ENCODE measurements at regions of chr1 and their contacts with region 1.

Region 1: GRCh38 chr1:24536391-24536840 is 19.5 kb upstream of the NCMAP start:
- DNase-seq: peak; percentile 54 to 96 (median 69)
- ATAC-seq: peak; percentile 77
- H3K4me3 ChIP-seq: no peak overlapping the region
- H3K4me3 Mint-ChIP-seq: peak overlapping the region; percentile 83
- H3K27ac ChIP-seq: peak overlapping the region; percentile 86
- H3K27ac Mint-ChIP-seq: peak overlapping the region; percentile 99
- H3K4me1 ChIP-seq: peaks cover 60% of the 10 kb centered on the region
- H3K4me1 Mint-ChIP-seq: peaks cover 73% of the 10 kb centered on the region
- H3K27me3 ChIP-seq: no peaks in the 10 kb centered on the region
- H3K27me3 Mint-ChIP-seq: no peaks in the 10 kb centered on the region
- CTCF ChIP-seq: no peak

Region 2: DNA sequence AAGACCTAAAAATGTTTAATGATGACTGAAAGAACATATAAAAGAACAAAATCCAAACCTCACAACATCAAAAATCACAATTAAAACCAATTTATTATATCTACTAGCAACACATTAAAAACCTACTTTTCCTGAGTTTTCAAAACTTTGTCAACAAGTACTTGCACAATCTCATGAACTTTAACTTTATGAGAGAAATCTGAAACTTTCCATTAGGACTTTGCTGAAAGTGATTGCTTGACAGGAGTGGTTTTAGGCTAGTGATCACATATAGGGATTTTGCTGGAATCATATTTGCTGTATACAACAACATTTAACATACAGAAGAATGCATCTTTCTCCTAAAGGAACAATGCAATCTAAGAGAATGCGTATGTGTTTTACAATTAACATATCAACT is 1205.6 kb before region 1 on chr1:
- CTCF ChIA-PET with region 1: no interaction called
- POLR2A ChIA-PET with region 1: no interaction called
- intact Hi-C with region 1: no loop called
- DNase-seq: no peak
- ATAC-seq: no peak
- H3K4me3 ChIP-seq: no peak overlapping the region
- H3K4me3 Mint-ChIP-seq: no peak overlapping the region
- H3K27ac ChIP-seq: no peak overlapping the region
- H3K27ac Mint-ChIP-seq: peak overlapping the region; percentile 21
- H3K4me1 ChIP-seq: no peaks in the 10 kb centered on the region
- H3K4me1 Mint-ChIP-seq: peaks cover 34% of the 10 kb centered on the region
- H3K27me3 ChIP-seq: no peaks in the 10 kb centered on the region
- H3K27me3 Mint-ChIP-seq: no peaks in the 10 kb centered on the region
- CTCF ChIP-seq: no peak

Region 3: GRCh38 chr1:24065304-24066050 is 470.9 kb before region 1 on chr1:
- CTCF ChIA-PET with region 1: no interaction called
- POLR2A ChIA-PET with region 1: no interaction called
- intact Hi-C with region 1: no loop called
- DNase-seq: no peak
- ATAC-seq: no peak
- H3K4me3 ChIP-seq: no peak overlapping the region
- H3K4me3 Mint-ChIP-seq: no peak overlapping the region
- H3K27ac ChIP-seq: no peak overlapping the region
- H3K27ac Mint-ChIP-seq: no peak overlapping the region
- H3K4me1 ChIP-seq: no peaks in the 10 kb centered on the region
- H3K4me1 Mint-ChIP-seq: no peaks in the 10 kb centered on the region
- H3K27me3 ChIP-seq: no peaks in the 10 kb centered on the region
- H3K27me3 Mint-ChIP-seq: no peaks in the 10 kb centered on the region
- CTCF ChIP-seq: no peak

Region 4: DNA sequence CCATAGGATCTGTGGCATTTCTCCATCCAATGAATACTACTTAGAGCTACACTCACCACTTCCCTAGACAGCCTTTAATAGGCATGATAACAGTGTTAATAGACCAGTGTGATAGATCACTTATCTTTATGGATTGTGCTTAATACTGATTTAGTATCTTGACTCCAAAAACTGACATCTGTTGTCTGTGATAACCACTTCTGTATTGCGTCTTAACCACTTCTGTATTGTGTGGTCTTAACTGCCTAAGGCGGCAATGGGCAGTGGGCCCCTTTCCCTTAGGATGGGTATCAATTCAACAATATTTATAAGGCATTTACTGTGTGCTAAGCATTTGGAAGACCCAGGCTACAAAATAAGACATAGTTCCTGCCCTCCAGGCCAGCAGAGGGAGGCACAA is 65.8 kb before region 1 on chr1:
- CTCF ChIA-PET with region 1: no interaction called
- POLR2A ChIA-PET with region 1: no interaction called
- intact Hi-C with region 1: no loop called
- DNase-seq: no peak
- ATAC-seq: no peak
- H3K4me3 ChIP-seq: no peak overlapping the region
- H3K4me3 Mint-ChIP-seq: no peak overlapping the region
- H3K27ac ChIP-seq: no peak overlapping the region
- H3K27ac Mint-ChIP-seq: peak overlapping the region; percentile 14
- H3K4me1 ChIP-seq: peaks cover 8% of the 10 kb centered on the region
- H3K4me1 Mint-ChIP-seq: peaks cover 12% of the 10 kb centered on the region
- H3K27me3 ChIP-seq: no peaks in the 10 kb centered on the region
- H3K27me3 Mint-ChIP-seq: no peaks in the 10 kb centered on the region
- CTCF ChIP-seq: no peak

Region 5: GRCh38 chr1:24481101-24481500 is 55.3 kb before region 1 on chr1:
- CTCF ChIA-PET with region 1: interaction called, 5 read pairs
- POLR2A ChIA-PET with region 1: no interaction called
- intact Hi-C with region 1: loop called (anchors 1 to 5 kb)
- DNase-seq: peak in 7 of 9 experiments; percentile 24 to 78 (median 61)
- ATAC-seq: peak; percentile 59
- H3K4me3 ChIP-seq: peak overlapping the region in 1 of 2 experiments; percentile 40
- H3K4me3 Mint-ChIP-seq: peak overlapping the region; percentile 73
- H3K27ac ChIP-seq: peak overlapping the region; percentile 67 to 68
- H3K27ac Mint-ChIP-seq: peak overlapping the region; percentile 98
- H3K4me1 ChIP-seq: peaks cover 64% of the 10 kb centered on the region
- H3K4me1 Mint-ChIP-seq: peaks cover 65% of the 10 kb centered on the region
- H3K27me3 ChIP-seq: no peaks in the 10 kb centered on the region
- H3K27me3 Mint-ChIP-seq: no peaks in the 10 kb centered on the region
- CTCF ChIP-seq: no peak

Region 6: GRCh38 chr1:24486331-24487065 is 49.9 kb before region 1 on chr1:
- CTCF ChIA-PET with region 1: interaction called, 5 read pairs
- POLR2A ChIA-PET with region 1: no interaction called
- intact Hi-C with region 1: loop called (anchors 1 to 5 kb)
- DNase-seq: peak in 7 of 9 experiments; percentile 9 to 80 (median 53)
- ATAC-seq: peak; percentile 30
- H3K4me3 ChIP-seq: peak overlapping the region in 1 of 2 experiments; percentile 3
- H3K4me3 Mint-ChIP-seq: peak overlapping the region; percentile 50
- H3K27ac ChIP-seq: peak overlapping the region; percentile 29 to 41
- H3K27ac Mint-ChIP-seq: peak overlapping the region; percentile 98
- H3K4me1 ChIP-seq: peaks cover 82% of the 10 kb centered on the region
- H3K4me1 Mint-ChIP-seq: peaks cover 72% of the 10 kb centered on the region
- H3K27me3 ChIP-seq: no peaks in the 10 kb centered on the region
- H3K27me3 Mint-ChIP-seq: no peaks in the 10 kb centered on the region
- CTCF ChIP-seq: no peak

Region 7: GRCh38 chr1:24514946-24515345 is 21.5 kb before region 1 on chr1:
- CTCF ChIA-PET with region 1: interaction called, 3 read pairs
- POLR2A ChIA-PET with region 1: interaction called, 7 read pairs
- intact Hi-C with region 1: loop called in 1 of 2 experiments (anchors 2 kb)
- DNase-seq: no peak
- ATAC-seq: no peak
- H3K4me3 ChIP-seq: no peak overlapping the region
- H3K4me3 Mint-ChIP-seq: peak overlapping the region; percentile 12
- H3K27ac ChIP-seq: no peak overlapping the region
- H3K27ac Mint-ChIP-seq: peak overlapping the region; percentile 81
- H3K4me1 ChIP-seq: peaks cover 68% of the 10 kb centered on the region
- H3K4me1 Mint-ChIP-seq: peaks cover 71% of the 10 kb centered on the region
- H3K27me3 ChIP-seq: no peaks in the 10 kb centered on the region
- H3K27me3 Mint-ChIP-seq: no peaks in the 10 kb centered on the region
- CTCF ChIP-seq: no peak

Region 8: DNA sequence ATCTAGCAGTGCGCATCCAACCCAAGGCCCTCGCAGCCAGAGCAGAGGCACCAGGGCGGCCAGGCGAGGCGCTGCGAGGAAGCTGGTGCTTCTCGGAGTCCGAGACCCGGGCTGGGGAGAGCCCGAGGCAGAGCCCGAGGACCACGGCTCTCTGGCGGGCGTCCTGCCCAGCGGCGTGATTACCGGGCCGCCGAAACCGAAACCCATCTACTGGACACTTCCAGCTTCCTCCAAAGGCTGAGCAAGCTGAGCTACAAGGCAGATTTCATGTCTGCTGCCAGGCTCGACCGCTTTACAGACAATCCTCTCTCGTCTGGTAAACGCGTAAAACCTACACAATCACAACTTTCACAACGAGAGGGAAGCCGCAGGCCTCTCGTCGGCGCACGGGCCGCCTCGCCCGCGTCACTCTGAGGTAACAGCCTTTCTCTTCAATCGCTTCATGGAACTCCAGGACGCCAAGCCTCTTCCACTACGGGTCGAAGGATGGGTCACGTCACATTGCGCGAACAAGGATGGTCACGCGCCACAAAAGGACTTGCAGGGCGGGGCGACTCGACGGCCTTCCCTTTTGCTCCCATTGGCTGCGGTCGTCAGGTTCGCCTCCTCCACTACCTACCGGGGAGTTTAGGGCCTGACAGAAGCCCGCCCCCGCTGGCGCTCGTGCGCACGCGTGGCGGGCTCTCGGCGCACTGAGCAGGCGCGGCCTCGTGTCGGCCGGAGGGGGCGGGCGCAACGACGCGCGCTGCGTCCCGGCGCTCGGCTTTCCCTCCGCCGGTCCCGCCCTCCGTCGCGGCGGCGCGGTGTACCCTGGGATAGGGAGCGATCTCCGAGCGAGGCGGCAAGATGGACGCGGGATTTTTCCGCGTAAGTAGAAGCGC is 106.3 kb after region 1 on chr1 and contains the start of gene SRRM1:
- CTCF ChIA-PET with region 1: no interaction called
- POLR2A ChIA-PET with region 1: no interaction called
- intact Hi-C with region 1: loop called (anchors 1 kb)
- DNase-seq: peak; percentile 96 to 100 (median 98)
- ATAC-seq: peak; percentile 86
- H3K4me3 ChIP-seq: peak within 1 kb of the TSS; percentile 89 to 98
- H3K4me3 Mint-ChIP-seq: peak within 1 kb of the TSS; percentile 88
- H3K27ac ChIP-seq: peak within 1 kb of the TSS; percentile 98 to 100
- H3K27ac Mint-ChIP-seq: peak within 1 kb of the TSS; percentile 99
- H3K4me1 ChIP-seq: peaks cover 32% of the 10 kb centered on the region
- H3K4me1 Mint-ChIP-seq: peaks cover 41% of the 10 kb centered on the region
- H3K27me3 ChIP-seq: no peaks in the 10 kb centered on the region
- H3K27me3 Mint-ChIP-seq: no peaks in the 10 kb centered on the region
- CTCF ChIP-seq: no peak
- total RNA-seq, gene SRRM1: 460 to 474 TPM

Measured in CD8-positive, alpha-beta T cell (primary cell).